ENCODE measurements at regions of chr15 and their contacts with region 1.

Region 1: GRCh38 chr15:75921729-75922703 is 18.3 kb downstream of the FBXO22 start:
- DNase-seq: no peak
- ATAC-seq: peak; percentile 76
- H3K4me3 ChIP-seq: no peak overlapping the region
- H3K27ac ChIP-seq: no peak overlapping the region
- H3K4me1 ChIP-seq: no peaks in the 10 kb centered on the region
- H3K27me3 ChIP-seq: no peaks in the 10 kb centered on the region
- CTCF ChIP-seq: peak; percentile 62

Region 2: DNA sequence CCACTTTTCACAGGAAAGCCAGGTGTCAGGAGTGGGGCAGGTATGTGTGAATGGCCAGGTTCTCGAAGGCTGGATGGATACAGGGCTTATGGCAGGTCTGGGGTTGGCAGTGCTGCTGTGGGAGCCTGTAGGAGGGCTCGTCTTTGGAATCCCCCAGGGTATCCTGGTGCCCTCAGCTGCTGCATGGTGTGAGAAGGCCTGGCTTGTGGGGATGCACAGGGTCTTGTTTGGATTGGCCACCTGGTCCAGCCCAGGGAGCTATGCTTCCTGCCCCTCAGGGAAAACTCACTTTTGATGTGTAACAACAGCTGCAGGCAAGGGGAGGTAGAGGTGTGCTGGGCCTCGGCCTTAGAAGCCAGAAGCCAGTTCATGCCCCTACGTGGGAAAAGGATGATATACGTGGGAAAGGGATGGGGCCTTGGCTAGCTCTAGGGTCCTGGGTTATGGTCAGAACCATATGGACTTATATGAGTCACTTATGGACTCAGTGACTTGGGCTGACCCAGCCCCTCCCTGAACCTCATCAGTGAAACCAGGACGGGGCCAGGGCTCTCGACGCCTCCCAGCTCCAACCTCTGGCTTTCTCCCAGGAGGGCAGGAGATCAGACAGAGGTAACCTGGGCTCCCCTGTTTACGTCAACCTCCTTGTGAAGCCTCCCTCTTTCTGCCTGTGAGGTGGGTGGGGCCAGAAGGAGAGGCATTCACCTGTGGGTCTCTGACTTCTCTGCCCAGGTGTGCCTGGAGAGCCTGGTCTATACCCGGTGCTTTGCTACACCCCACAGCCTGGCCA is 171.6 kb before region 1 on chr15:
- CTCF ChIA-PET with region 1: no interaction called
- POLR2A ChIA-PET with region 1: interaction called, 12 read pairs
- in situ Hi-C with region 1: no loop called
- intact Hi-C with region 1: no loop called
- DNase-seq: no peak
- ATAC-seq: no peak; the same call in 1 of the 2 replicates
- H3K4me3 ChIP-seq: no peak overlapping the region
- H3K27ac ChIP-seq: no peak overlapping the region
- H3K4me1 ChIP-seq: no peaks in the 10 kb centered on the region
- H3K27me3 ChIP-seq: no peaks in the 10 kb centered on the region
- CTCF ChIP-seq: no peak

Region 3: DNA sequence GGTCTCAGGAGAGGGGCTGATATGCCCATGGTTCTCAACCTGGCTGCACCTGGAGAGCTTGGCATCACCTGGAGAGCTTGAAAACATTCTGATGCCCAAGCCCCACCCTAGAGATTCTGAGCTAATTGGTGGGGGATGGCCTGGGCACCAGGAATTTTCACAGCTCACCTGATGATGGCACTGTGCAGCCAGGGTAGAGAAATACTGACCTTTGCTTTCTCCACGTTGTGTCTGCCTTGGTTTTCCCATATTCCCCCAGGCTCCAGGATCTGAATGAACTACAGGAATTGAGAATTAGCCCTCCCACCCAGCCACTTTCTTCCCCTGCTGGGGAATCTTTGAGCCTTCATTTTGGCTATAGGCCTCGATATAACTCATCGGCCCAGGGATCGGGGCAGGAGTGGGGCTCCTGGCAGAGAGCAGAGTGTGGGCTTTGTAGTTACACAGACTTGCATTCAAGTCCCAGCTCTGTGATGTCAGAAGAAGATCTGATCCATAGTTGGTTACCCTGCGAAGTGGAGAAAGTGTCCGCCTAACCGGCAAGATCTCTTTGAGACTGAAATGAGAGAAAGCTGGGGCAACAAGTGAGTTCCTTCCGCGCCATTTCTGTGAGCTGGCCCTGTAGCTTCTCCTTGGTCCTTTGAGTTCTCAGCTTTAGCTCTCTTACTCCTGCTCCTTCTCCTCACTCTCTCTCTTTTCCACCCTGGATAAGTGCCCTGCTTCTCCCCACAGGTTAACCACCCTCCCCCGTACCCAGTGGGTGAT is 111.8 kb before region 1 on chr15:
- CTCF ChIA-PET with region 1: interaction called, 3 read pairs
- POLR2A ChIA-PET with region 1: no interaction called
- in situ Hi-C with region 1: no loop called
- intact Hi-C with region 1: loop called (anchors 10 kb)
- DNase-seq: peak; percentile 20
- ATAC-seq: peak; percentile 92
- H3K4me3 ChIP-seq: no peak overlapping the region
- H3K27ac ChIP-seq: no peak overlapping the region
- H3K4me1 ChIP-seq: no peaks in the 10 kb centered on the region
- H3K27me3 ChIP-seq: peaks cover 3% of the 10 kb centered on the region; the same call in 1 of the 2 replicates
- CTCF ChIP-seq: peak; percentile 76

Region 4: DNA sequence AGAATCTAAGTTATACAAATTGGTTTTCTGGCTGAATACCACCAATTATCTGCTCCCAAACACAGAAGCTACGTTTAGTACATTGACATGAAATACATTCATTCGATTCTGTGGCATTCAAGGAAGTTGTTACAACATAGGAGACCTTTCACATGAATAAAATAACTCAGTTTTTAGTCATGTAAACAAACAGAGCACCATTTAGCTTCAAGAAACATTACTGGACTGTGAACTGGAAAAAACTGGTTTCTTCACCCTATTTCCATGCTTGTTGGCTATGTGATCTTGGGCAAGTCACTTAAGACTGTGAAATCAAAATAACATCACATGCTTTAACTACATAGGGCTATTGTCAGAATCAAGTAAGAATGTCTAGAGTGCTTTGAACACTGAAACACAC is 44.1 kb after region 1 on chr15:
- CTCF ChIA-PET with region 1: no interaction called
- POLR2A ChIA-PET with region 1: interaction called, 10 read pairs
- in situ Hi-C with region 1: no loop called
- intact Hi-C with region 1: no loop called
- DNase-seq: no peak
- ATAC-seq: no peak
- H3K4me3 ChIP-seq: no peak overlapping the region
- H3K27ac ChIP-seq: no peak overlapping the region
- H3K4me1 ChIP-seq: peaks cover 7% of the 10 kb centered on the region; the same call in 1 of the 2 replicates
- H3K27me3 ChIP-seq: no peaks in the 10 kb centered on the region; the same call in 1 of the 2 replicates
- CTCF ChIP-seq: no peak

Region 5: GRCh38 chr15:77877869-77878577 is 1956.0 kb after region 1 on chr15:
- CTCF ChIA-PET with region 1: no interaction called
- POLR2A ChIA-PET with region 1: no interaction called
- in situ Hi-C with region 1: no loop called
- intact Hi-C with region 1: no loop called
- DNase-seq: no peak
- ATAC-seq: no peak
- H3K4me3 ChIP-seq: no peak overlapping the region
- H3K27ac ChIP-seq: no peak overlapping the region
- H3K4me1 ChIP-seq: no peaks in the 10 kb centered on the region
- H3K27me3 ChIP-seq: no peaks in the 10 kb centered on the region
- CTCF ChIP-seq: no peak